Right ventricle myocardium superior (tissue), 1 donor: ENCODE measurements at regions of chr9 and their contacts with region 1.

Region 1: GRCh38 chr9:127396808-127397497 is at the start of gene SLC2A8:
- DNase-seq: peak; percentile 98
- ATAC-seq: peak; percentile 96
- total RNA-seq, gene SLC2A8: 16.6 TPM

Region 2: DNA sequence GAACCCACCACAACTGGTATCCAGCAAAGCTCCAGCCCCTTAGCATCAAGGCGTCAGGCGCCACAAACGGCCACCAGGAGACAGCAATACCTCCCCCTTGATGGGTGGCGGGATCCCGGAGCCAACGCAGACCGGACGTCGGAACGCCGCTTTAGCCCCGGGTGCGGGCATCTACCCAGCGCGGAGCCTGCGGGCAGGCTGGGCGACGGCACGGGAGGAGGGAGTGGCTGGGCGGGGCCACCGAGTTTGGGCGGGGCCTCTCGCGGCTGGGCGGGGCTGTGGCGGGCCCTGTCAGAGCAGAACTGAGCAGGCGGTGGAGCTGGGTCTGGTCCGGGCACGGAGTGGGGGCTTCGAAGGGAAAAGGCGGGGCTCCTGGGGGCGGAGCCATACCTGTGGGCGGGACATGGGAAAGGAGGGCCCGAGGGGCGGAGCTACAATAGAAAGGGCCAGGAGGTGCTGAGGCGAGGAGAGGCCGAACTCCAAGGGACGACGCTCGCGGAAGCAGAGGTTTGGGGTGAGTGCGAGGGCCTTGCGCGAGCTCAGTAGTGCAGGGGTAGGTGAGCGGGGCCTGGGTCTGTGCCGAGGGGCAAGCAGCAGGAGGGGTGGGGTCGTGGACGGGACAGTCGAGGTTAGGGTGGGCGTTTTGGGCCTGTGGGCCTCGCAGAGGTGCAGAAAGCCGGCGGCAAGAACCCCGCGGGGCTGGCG is 172.6 kb before region 1 on chr9:
- intact Hi-C with region 1: loop called (anchors 10 kb)
- DNase-seq: peak; percentile 94
- ATAC-seq: peak; percentile 87

Region 3: DNA sequence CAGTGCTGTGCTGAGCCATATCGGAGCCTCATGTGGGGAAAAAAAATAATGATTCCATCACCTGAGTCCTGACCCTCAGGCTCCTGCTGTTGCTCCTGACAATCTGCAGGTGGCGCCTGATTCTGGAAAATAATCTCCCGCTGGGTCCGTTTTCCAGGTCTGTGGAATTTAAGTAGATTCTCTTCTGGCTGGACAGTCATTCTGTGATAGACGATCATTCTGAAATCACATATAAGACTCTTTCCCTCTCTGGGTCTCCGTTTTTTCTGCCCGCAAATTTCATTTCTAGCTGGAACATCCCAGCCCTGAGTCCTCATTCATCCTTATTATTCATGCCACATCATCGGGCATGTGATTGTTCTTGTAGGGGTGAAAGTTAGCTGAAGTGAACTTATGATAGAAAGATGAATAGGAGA is 193.0 kb after region 1 on chr9:
- intact Hi-C with region 1: no loop called
- DNase-seq: no peak
- ATAC-seq: peak; percentile 74